PC-9 (cell line): ENCODE measurements at regions of chr11 and their contacts with region 1.

Region 1: GRCh38 chr11:80083531-80083951 is 642.7 kb upstream of the TENM4 start:
- DNase-seq: peak; percentile 78 to 81
- H3K4me3 ChIP-seq: no peak overlapping the region
- H3K27ac ChIP-seq: no peak overlapping the region
- H3K4me1 ChIP-seq: 0 out of 2 replicates have a peak, but pooled peaks cover 7% of the 10 kb centered on the region
- H3K27me3 ChIP-seq: no peaks in the 10 kb centered on the region
- CTCF ChIP-seq: no peak

Region 2: GRCh38 chr11:79600711-79601110 is 482.8 kb before region 1 on chr11:
- CTCF ChIA-PET with region 1: no interaction called
- POLR2A ChIA-PET with region 1: no interaction called
- intact Hi-C with region 1: no loop called
- DNase-seq: no peak
- H3K4me3 ChIP-seq: no peak overlapping the region
- H3K27ac ChIP-seq: no peak overlapping the region
- H3K4me1 ChIP-seq: no peaks in the 10 kb centered on the region
- H3K27me3 ChIP-seq: 0 out of 2 replicates have a peak, but pooled peaks cover under 1% of the 10 kb centered on the region
- CTCF ChIP-seq: no peak

Region 3: DNA sequence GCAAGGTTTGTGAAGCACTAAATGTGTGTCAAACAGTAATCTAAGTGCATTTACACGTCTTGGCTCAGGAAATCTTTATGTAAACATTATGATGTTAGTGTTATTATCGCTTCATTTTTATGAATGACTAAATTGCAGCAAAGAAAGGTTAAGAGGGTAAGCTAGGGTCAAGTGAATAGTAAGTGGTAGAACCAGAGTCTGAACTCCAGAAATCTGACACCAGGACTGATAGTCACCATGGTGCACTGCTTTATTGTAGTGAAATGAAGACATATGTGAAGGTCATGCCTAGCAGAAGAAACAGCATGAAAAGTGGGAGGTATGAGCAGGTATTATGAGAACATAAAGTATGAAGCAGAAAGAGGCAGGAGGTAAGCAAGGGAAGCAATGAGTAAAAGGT is 274.1 kb before region 1 on chr11:
- CTCF ChIA-PET with region 1: no interaction called
- POLR2A ChIA-PET with region 1: no interaction called
- intact Hi-C with region 1: no loop called
- DNase-seq: no peak
- H3K4me3 ChIP-seq: no peak overlapping the region
- H3K27ac ChIP-seq: no peak overlapping the region
- H3K4me1 ChIP-seq: no peaks in the 10 kb centered on the region
- H3K27me3 ChIP-seq: no peaks in the 10 kb centered on the region
- CTCF ChIP-seq: no peak

Region 4: DNA sequence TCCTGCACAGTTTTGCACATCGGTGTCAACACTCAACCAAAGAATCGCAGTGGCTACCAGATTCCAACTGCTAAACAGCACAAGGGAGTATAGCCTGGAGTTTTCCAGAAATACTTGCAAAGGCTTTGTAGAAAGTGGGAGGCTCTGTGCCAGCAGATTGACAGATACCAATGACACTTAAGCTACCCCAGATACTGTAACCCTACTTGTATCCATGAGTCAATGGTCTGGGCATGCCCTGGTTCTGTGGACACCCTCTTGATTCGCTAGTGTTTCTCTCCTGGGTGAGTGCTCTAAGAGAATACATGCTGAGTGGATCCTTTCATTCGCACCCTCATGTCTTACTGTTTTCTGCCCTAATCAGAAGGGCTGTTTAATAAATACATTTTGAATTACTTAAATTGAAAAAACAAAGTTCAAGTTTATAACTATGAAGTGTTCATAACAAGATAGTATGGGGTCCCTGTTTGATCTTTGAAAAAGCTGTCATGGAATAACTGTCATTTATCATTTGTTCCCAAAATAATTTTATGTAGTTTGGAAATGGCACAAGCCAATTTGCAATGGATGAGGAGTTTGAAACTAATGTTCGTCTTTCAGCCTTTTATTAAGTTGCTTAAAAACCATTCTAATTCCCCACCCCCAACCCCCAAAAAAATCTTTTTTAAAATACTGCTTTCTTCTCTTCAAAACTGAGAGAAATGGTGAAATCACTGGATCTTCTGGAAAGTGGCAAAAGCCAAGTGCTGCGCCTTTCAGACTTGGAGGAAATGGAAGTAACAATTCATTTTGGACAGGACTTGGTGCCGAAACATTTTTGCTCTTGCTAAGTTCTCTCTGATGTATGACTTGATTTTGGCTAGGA is 42.2 kb before region 1 on chr11:
- CTCF ChIA-PET with region 1: no interaction called
- POLR2A ChIA-PET with region 1: no interaction called
- intact Hi-C with region 1: no loop called
- DNase-seq: no peak
- H3K4me3 ChIP-seq: no peak overlapping the region
- H3K27ac ChIP-seq: no peak overlapping the region
- H3K4me1 ChIP-seq: no peaks in the 10 kb centered on the region
- H3K27me3 ChIP-seq: no peaks in the 10 kb centered on the region
- CTCF ChIP-seq: no peak

Region 5: DNA sequence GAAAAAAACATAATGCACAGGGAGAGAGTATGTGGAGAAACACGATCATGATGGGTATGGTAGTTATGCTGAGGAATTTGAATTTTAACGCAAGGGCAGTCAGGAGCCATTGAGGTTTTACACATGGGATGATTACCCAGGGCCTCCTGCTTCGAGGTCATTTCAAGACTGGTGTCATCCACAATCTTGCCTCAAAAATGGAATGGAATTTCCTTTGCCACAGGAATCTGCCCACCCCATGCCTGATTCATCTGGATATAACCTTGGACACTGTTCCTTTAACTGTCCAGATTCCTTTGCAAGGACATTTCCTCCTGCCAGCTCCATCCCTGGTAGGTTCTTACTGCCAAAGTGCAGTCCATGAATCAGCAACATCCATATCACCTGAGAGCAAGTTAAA is 13.2 kb after region 1 on chr11:
- CTCF ChIA-PET with region 1: interaction called, 3 read pairs
- POLR2A ChIA-PET with region 1: interaction called, 6 read pairs
- intact Hi-C with region 1: loop called (anchors 1 kb)
- DNase-seq: peak in 1 of 2 experiments; percentile 72
- H3K4me3 ChIP-seq: no peak overlapping the region
- H3K27ac ChIP-seq: no peak overlapping the region
- H3K4me1 ChIP-seq: no peaks in the 10 kb centered on the region
- H3K27me3 ChIP-seq: no peaks in the 10 kb centered on the region
- CTCF ChIP-seq: no peak

Region 6: DNA sequence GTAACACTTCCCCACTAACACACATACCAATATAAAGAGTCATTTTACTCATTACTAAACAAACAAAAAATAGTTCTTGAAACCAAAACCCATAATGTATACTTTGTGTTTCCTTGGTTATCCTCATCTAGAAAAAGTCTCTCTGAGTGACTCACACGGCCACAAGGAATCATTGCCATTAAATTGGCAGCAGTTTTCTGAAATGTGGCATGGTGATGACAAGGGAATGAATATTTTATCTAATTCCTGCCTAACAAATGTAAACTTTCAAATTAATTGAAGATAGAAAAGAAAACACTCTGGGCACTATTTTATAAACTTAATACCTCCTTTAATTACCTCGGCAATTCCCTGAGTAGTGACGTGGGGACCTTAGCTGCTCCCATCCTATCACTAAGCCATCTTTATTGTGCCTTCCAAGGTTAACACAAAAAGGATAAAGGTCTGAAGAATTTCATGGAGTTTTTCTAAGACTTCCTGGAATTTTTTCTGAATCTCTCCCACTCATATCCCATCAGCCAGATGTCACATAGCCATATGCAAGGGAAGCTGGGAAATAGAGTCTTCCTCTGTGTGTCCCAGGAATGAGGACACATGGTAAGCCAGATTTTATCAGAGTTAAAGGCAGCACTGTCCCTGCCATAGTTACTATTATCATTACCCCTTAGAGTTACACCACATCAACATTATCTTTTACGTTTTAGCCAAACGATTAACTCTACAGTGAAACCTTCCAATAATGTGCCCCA is 214.5 kb after region 1 on chr11:
- CTCF ChIA-PET with region 1: no interaction called
- POLR2A ChIA-PET with region 1: no interaction called
- intact Hi-C with region 1: loop called (anchors 1 kb)
- DNase-seq: peak; percentile 51 to 88
- H3K4me3 ChIP-seq: no peak overlapping the region; the same call in 1 of the 2 replicates
- H3K27ac ChIP-seq: peak overlapping the region; percentile 64
- H3K4me1 ChIP-seq: peaks cover 17% of the 10 kb centered on the region
- H3K27me3 ChIP-seq: no peaks in the 10 kb centered on the region
- CTCF ChIP-seq: no peak